Naive thymus-derived CD8-positive, alpha-beta T cell (primary cell): ENCODE measurements at regions of chr6 and their contacts with region 1.

Region 1: GRCh38 chr6:111873178-111874024 is at the start of gene FYN:
- DNase-seq: peak; percentile 94 to 99 (median 98)
- ATAC-seq: peak; percentile 82 to 86
- H3K4me3 Mint-ChIP-seq: peak within 1 kb of the TSS; percentile 86 to 100 (median 100)
- H3K27ac Mint-ChIP-seq: peak within 1 kb of the TSS; percentile 89 to 100 (median 97)
- H3K4me1 Mint-ChIP-seq: peaks cover 31 to 56% (median 41%) of the 10 kb centered on the region in 4 donors
- H3K27me3 Mint-ChIP-seq: no peaks in the 10 kb centered on the region
- polyA plus RNA-seq, gene FYN: 159 to 317 (median 317) TPM

Region 2: GRCh38 chr6:111992851-111993250 is 119.5 kb after region 1 on chr6:
- POLR2A ChIA-PET with region 1: interaction called, 12 read pairs
- DNase-seq: peak in 5 of 10 donors; percentile 31 to 45 (median 32)
- ATAC-seq: peak; percentile 26 to 53
- H3K4me3 Mint-ChIP-seq: peak overlapping the region in 9 of 10 donors; percentile 9 to 80 (median 54)
- H3K27ac Mint-ChIP-seq: peak overlapping the region; percentile 79 to 96 (median 91)
- H3K4me1 Mint-ChIP-seq: peaks cover 60 to 92% (median 88%) of the 10 kb centered on the region in 4 donors
- H3K27me3 Mint-ChIP-seq: no peaks in the 10 kb centered on the region